Cardiac septum (tissue), 1 donor: ENCODE measurements at regions of chr1 and their contacts with region 1.

Region 1: GRCh38 chr1:223074445-223075300 is 68.4 kb downstream of the TLR5 start:
- DNase-seq: no peak

Region 2: DNA sequence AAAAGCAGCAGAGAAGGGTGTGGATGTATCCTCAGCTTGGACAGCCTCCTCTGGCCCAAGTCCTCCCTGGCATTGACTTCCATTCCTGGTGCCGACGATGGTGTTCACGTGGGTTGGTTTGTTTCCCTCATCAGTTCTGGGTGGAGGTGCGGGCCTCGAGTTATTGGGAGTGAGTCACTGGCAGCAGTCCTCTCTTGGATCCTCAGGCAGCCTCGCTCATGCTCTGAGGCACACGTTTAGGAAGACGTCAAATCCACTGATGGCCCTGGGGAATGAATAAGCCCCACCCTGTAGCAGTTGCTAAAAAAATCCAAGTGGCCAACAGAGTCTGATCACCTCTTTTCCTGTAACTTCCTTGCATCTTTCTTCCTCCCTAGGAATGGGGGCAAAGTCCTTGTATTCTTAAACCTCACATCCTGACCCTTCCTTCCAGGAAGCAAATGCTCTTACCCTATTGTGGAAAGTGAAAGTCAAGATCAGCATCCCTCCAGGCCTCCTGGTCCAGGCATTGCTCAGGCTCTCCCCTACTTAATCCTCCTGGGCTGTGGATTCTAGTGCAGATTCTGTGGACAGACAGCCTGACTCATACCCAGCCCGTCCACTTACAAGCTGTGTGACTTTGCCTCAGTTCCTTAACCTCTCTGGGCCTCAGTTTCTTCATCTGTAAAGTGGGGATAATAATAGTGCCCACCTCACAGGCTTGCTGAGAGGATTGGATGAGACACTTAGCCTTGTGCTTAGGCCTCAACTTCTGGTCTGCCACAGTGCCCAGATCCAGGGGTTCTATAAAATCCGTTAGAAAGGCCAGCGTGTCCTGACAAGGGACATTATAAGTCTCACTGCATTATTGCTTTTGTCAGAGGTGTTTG is 42.7 kb before region 1 on chr1:
- intact Hi-C with region 1: loop called (anchors 5 kb)
- DNase-seq: peak; percentile 81